Left ventricle myocardium superior (tissue), 1 donor: ENCODE measurements at regions of chrX and their contacts with region 1.

Region 1: GRCh38 chrX:140057001-140057411 is 91.7 kb upstream of the CXorf66 start:
- DNase-seq: peak; percentile 65
- ATAC-seq: peak; percentile 60

Region 2: GRCh38 chrX:140664939-140665338 is 607.9 kb after region 1 on chrX:
- intact Hi-C with region 1: loop called (anchors 10 kb)
- DNase-seq: no peak
- ATAC-seq: no peak